ENCODE measurements at regions of chr2 and their contacts with region 1.

Region 1: GRCh38 chr2:201257956-201258665 is 2.2 kb upstream of the CASP8 start:
- DNase-seq: peak; percentile 93 to 99 (median 98)
- H3K4me3 ChIP-seq: peak overlapping the region; percentile 27 to 92 (median 68)
- H3K27ac ChIP-seq: peak overlapping the region; percentile 99
- H3K4me1 ChIP-seq: peaks cover 45 to 94% (median 86%) of the 10 kb centered on the region in 4 experiments
- H3K27me3 ChIP-seq: no peaks in the 10 kb centered on the region

Region 2: DNA sequence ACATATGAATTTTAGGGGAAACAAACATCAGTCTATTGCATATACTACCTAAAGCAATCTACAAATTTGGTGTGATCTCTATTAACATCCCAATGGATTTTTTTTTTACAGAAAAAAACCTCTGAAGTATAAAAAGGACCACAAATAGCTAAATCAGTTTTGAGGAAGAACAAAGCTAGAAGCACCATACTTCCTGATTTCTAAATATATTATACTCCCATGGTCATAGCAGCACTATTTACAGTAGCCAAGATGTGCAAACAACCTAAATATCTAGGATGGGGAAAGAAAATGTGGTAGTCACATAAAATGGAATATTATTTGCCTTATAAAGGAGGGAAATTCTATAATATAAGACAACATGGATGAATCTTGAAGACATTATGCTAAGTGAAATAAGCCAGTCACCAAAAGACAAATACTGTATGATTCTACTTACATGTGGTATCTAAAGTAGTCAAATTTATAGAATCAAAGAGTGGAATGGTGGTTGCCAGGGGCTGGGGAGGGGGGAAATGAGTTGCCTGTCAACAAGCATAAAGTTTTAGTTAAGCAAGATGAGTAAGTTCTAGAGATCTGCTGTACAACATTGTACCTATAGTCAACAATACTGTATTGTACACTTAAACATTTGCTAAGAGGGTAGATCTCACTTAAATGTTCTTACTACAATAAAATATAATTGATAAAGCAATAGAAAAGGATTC is 15.4 kb before region 1 on chr2:
- CTCF ChIA-PET with region 1: interaction called, 33 read pairs
- POLR2A ChIA-PET with region 1: interaction called, 3 read pairs
- DNase-seq: no peak
- H3K4me3 ChIP-seq: no peak overlapping the region
- H3K27ac ChIP-seq: peak overlapping the region in 1 of 2 experiments; percentile 25
- H3K4me1 ChIP-seq: peaks cover 15 to 29% (median 22%) of the 10 kb centered on the region in 4 experiments
- H3K27me3 ChIP-seq: no peaks in the 10 kb centered on the region

Region 3: DNA sequence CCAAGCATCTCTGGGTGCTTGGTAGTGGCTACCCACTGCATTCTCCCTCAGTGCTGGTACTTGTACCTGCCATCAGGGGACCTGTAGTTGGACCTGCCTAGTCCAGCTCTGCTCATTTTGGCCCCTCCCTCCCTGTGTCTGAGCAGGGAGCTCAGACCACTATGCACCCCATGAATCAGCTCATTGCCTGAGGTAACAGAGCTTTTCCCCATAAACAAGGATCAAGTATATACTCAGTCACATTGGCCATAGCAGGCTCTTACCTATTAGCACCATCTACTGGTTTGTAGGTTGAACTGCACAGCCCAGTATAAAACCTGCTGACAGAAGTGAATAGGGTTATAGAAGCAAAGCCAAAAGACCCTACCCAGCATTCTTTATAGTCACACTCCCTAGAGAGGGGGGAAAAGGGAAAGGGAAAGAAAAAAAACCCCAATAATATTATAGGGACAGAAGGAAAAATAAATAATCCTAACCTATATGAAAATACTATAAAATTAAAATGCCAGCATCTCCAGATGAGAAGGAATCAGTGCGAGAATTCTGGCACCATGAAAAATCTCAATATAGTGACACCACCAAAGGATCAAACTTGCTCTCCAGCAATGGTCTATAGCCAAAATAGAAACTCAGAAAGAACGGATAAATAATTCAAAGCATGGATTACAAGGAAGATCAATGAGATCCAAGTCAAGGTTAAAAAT is 105.9 kb after region 1 on chr2:
- CTCF ChIA-PET with region 1: interaction called, 10 read pairs
- POLR2A ChIA-PET with region 1: no interaction called
- DNase-seq: peak; percentile 55 to 76 (median 74)
- H3K4me3 ChIP-seq: no peak overlapping the region
- H3K27ac ChIP-seq: no peak overlapping the region
- H3K4me1 ChIP-seq: peaks cover 0 to 2% (median 1%) of the 10 kb centered on the region in 4 experiments
- H3K27me3 ChIP-seq: no peaks in the 10 kb centered on the region

Region 4: DNA sequence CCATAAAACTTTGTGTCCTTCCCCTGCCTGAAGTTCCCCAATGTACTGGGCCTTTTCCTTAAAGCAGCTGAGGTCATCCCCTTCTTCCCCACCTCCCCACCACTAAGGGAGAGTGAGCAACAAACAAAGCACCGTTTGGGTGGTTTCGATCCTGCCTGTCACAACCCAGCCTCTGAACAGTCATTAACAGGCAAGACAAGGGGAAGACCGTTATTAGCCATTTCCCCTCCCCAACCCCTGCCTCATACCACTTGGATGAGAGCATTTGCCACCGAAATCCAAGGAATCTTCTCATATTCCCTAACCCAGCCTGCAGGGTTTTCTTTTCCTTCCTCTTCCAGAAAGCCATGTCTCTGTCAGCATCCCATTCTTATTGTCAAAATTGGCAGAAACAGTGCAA is 259.0 kb after region 1 on chr2:
- CTCF ChIA-PET with region 1: no interaction called
- POLR2A ChIA-PET with region 1: no interaction called
- DNase-seq: no peak
- H3K4me3 ChIP-seq: no peak overlapping the region
- H3K27ac ChIP-seq: no peak overlapping the region
- H3K4me1 ChIP-seq: no peaks in the 10 kb centered on the region
- H3K27me3 ChIP-seq: no peaks in the 10 kb centered on the region